PC-3 (cell line): ENCODE measurements at regions of chr15 and their contacts with region 1.

Region 1: DNA sequence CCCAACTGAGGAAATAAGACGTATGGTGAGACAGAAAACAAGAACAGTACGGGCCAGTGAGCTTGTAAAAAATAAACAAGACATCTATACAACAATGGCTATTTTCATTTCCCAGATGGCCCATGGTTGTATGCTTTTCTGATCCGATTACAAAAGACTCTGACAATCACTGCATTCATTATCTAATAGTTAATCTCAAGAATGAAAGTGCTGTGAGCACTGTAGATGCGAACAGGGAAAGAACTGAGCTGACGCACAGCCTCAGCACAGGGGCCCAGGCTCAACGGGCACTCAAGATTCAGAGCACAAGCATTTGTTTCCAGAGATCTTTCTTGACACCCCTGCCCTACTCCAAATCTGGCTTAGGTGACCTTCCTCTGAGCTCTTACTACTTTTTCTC is 6.9 kb downstream of the MTMR10 start:
- DNase-seq: no peak
- ATAC-seq: no peak
- H3K4me3 ChIP-seq: no peak overlapping the region
- H3K27ac ChIP-seq: no peak overlapping the region
- H3K4me1 ChIP-seq: peaks cover 6% of the 10 kb centered on the region; the same call in 1 of the 2 replicates
- H3K27me3 ChIP-seq: no peaks in the 10 kb centered on the region
- CTCF ChIP-seq: no peak

Region 2: DNA sequence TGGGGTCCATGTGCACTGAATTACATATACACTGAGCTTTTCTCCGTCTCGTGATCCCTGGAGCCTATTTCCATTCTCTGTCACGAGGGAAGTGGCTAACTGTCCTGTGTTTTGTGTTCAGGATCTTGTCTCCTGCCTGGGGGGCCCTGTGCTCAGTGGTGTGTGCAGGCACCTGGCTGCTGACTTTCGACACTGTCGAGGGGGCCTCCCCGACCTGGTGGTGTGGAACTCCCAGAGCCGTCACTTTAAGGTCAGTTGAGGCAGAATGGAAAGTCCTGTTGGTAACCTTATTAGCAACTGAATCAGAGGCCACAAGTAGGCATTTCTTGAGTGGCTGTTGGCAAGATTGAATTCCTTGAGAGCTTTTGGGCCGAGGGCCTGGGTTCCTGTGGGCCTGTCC is 54.1 kb before region 1 on chr15:
- CTCF ChIA-PET with region 1: no interaction called
- POLR2A ChIA-PET with region 1: no interaction called
- intact Hi-C with region 1: loop called (anchors 5 kb)
- DNase-seq: no peak
- ATAC-seq: no peak
- H3K4me3 ChIP-seq: no peak overlapping the region
- H3K27ac ChIP-seq: no peak overlapping the region
- H3K4me1 ChIP-seq: no peaks in the 10 kb centered on the region
- H3K27me3 ChIP-seq: no peaks in the 10 kb centered on the region
- CTCF ChIP-seq: no peak